ENCODE measurements at regions of chr19 and their contacts with region 1.

Region 1: DNA sequence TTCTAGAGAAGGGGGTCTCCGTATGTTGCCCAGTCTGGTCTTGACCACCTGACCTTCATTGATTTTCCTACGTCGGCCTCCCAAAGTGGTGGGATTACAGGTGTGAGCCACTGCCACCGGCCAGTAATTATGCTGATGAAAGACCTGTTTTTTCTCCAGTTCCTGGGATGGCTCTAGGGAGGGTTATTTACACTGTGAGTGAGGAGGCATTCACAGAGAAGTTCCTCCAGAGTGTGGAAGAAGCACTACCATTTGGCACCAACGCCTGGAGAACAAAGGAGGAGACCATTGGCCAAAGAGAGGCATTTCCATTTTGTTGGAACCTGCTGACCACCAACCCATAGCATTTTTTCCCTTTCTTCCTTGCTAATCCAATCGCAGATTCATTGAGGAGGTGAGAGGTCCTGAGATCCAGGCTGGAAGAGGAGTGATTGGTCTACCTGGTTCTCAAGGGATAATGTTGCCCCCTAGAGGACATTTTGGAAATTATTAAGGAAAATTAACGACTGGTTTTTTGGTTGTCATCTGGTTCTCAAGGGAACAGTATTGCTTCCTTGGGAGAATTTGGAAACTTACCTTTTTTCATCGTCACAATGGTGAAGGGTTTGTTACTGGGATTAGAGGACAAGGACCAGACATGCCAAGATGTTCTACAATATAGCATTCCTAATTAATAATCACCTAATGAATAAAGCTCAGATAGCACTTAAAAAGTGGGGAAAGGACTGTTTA is 5.5 kb upstream of the SAE1 start:
- DNase-seq: peak; percentile 67 to 76 (median 67)
- H3K4me3 ChIP-seq: no peak overlapping the region
- H3K27ac ChIP-seq: no peak overlapping the region
- H3K4me1 ChIP-seq: peaks cover 0 to 3% (median 0%) of the 10 kb centered on the region in 4 experiments
- H3K27me3 ChIP-seq: no peaks in the 10 kb centered on the region

Region 2: DNA sequence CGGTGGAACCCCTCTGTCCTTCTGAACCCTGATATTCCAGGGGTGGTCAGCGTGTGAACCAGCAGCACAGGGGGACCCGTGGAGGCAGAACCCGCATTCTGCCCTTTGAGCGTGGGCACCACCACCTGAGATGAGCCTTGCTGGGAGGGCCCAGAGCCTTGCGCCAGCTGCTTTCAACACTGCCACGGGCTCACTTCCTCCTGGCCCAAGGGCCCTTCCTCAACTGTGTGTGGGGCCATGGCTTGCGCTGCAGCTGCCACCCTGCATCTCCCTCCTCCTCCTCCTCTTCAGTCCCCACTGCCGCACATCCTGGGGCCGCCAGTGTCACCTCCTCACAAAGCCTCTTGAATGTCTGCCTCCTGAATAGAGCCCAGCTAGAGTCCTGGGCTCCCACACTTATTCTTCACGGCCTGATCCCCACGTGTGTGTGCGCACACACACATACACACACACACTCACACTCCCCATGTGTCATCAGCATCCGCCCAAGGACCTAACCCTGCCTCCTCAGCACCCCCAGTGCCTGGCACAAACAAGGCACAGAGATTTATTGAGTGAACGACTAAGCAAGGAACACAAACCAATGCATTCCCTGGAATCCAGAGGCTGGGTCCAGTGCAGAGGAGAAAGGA is 49.8 kb before region 1 on chr19:
- CTCF ChIA-PET with region 1: interaction called, 116 read pairs
- POLR2A ChIA-PET with region 1: no interaction called
- DNase-seq: peak in 2 of 3 donors; percentile 66 to 77
- H3K4me3 ChIP-seq: peak overlapping the region in 2 of 7 experiments; percentile 19 to 25
- H3K27ac ChIP-seq: peak overlapping the region; percentile 50 to 72
- H3K4me1 ChIP-seq: peaks cover 7 to 24% (median 23%) of the 10 kb centered on the region in 4 experiments
- H3K27me3 ChIP-seq: no peaks in the 10 kb centered on the region

Measured in common myeloid progenitor, CD34-positive (primary cell).